ENCODE measurements at regions of chr1 and their contacts with region 1.

Region 1: GRCh38 chr1:78617615-78618026 is 2.6 kb upstream of the IFI44L start:
- DNase-seq: peak; percentile 66
- H3K4me3 Mint-ChIP-seq: no peak overlapping the region
- H3K27ac Mint-ChIP-seq: no peak overlapping the region
- H3K4me1 Mint-ChIP-seq: peaks cover 30% of the 10 kb centered on the region
- H3K27me3 Mint-ChIP-seq: no peaks in the 10 kb centered on the region

Region 2: GRCh38 chr1:77430966-77431690 is 1186.5 kb before region 1 on chr1:
- CTCF ChIA-PET with region 1: no interaction called
- intact Hi-C with region 1: loop called (anchors 5 kb)
- DNase-seq: no peak
- H3K4me3 Mint-ChIP-seq: no peak overlapping the region
- H3K27ac Mint-ChIP-seq: no peak overlapping the region
- H3K4me1 Mint-ChIP-seq: peaks cover 28% of the 10 kb centered on the region
- H3K27me3 Mint-ChIP-seq: no peaks in the 10 kb centered on the region

Region 3: DNA sequence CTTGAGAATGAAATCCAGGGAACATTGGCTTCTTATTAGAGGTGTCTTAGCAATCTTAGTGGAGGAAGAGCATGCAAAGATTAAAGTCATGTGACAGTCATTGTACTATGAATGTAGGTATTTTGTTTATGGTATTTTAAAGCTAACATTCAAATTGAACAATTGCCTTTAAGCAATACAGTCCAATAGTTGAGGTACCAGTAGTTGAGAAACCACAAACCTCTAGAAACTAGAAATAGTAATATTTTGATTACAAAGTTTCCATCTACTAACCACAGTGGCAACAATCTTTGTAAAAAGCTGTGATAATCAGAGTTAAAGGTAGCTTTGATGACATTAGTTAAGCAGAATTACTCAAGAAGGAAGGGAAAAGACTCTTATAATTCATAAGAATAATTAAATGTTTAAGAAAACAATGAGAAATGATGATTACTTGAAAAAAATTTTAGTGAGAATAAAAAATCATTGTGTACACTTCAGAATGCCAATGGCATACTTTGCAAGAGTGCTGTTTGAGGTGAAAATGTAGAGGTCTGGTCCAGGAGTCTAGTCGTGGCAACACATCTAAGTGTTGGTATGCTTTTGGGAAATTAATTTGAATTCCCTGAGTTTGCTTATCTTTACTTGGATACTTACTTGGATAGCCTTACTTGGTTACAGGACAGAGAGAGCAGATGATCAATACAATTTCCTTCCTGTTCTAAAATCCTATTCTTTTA is 231.7 kb before region 1 on chr1:
- CTCF ChIA-PET with region 1: no interaction called
- intact Hi-C with region 1: no loop called
- DNase-seq: no peak
- H3K4me3 Mint-ChIP-seq: no peak overlapping the region
- H3K27ac Mint-ChIP-seq: no peak overlapping the region
- H3K4me1 Mint-ChIP-seq: no peaks in the 10 kb centered on the region
- H3K27me3 Mint-ChIP-seq: peaks cover 2% of the 10 kb centered on the region

Region 4: GRCh38 chr1:78649628-78650027 is 32.0 kb after region 1 on chr1 and contains the start of gene IFI44:
- CTCF ChIA-PET with region 1: interaction called, 8 read pairs
- intact Hi-C with region 1: loop called (anchors 1 kb)
- DNase-seq: peak; percentile 87
- H3K4me3 Mint-ChIP-seq: peak within 1 kb of the TSS; percentile 87
- H3K27ac Mint-ChIP-seq: peak within 1 kb of the TSS; percentile 74
- H3K4me1 Mint-ChIP-seq: peaks cover 50% of the 10 kb centered on the region
- H3K27me3 Mint-ChIP-seq: no peaks in the 10 kb centered on the region
- total RNA-seq, gene IFI44: 40.1 to 42.3 TPM

Region 5: GRCh38 chr1:78839704-78840277 is 222.2 kb after region 1 on chr1:
- CTCF ChIA-PET with region 1: no interaction called
- intact Hi-C with region 1: loop called (anchors 2 kb)
- DNase-seq: peak; percentile 30
- H3K4me3 Mint-ChIP-seq: no peak overlapping the region
- H3K27ac Mint-ChIP-seq: no peak overlapping the region
- H3K4me1 Mint-ChIP-seq: peaks cover 11% of the 10 kb centered on the region
- H3K27me3 Mint-ChIP-seq: no peaks in the 10 kb centered on the region

Region 6: GRCh38 chr1:79040424-79041082 is 422.9 kb after region 1 on chr1:
- CTCF ChIA-PET with region 1: no interaction called
- intact Hi-C with region 1: loop called (anchors 1 kb)
- DNase-seq: no peak
- H3K4me3 Mint-ChIP-seq: no peak overlapping the region
- H3K27ac Mint-ChIP-seq: peak overlapping the region; percentile 62
- H3K4me1 Mint-ChIP-seq: peaks cover 10% of the 10 kb centered on the region
- H3K27me3 Mint-ChIP-seq: no peaks in the 10 kb centered on the region